A673 (cell line): ENCODE measurements at regions of chr2 and their contacts with region 1.

Region 1: DNA sequence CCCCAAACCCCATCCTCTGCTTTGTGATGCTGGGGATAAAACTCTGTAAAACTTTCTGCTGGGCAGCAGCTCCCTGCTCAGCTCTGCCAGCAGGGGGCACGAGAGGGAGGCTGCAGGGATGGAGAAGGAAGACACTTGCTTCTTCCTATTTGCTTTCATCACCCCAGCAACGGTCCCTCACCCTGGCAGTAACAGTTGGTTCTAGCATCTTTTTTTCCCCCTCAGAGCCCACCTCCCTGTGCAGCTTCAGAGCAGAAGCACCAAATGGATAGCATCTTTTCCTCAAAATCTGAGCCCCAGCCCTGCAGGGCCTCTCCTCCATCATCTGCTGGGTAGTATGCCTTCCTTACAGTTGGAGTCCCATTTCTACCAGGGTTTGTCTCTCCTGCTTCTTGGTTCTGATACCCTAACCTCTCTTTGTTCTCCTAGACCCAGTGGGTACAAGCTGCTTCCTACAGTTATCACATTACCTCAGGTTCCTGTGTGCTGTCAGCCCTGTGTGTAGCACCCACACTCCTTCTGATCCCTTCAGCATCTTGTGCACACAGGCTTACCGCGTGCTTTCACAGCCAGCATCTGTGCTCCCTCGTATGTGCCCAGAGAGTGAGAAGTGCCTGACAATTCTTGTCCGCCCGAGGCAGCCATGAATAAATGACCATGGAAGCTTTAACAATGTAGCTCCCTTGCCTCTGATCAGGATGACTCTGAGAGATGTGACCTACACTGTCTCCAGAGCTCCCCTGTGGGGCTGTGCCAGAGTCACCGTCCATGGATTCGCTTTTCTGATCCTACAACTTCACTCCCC is 14.5 kb downstream of the CKAP2L start:
- DNase-seq: peak; percentile 80
- H3K4me3 ChIP-seq: no peak overlapping the region
- H3K27ac ChIP-seq: no peak overlapping the region
- H3K4me1 ChIP-seq: no peaks in the 10 kb centered on the region
- H3K27me3 ChIP-seq: no peaks in the 10 kb centered on the region
- CTCF ChIP-seq: peak; percentile 94

Region 2: GRCh38 chr2:112884869-112885505 is 135.0 kb after region 1 on chr2:
- CTCF ChIA-PET with region 1: interaction called, 7 read pairs
- POLR2A ChIA-PET with region 1: no interaction called
- intact Hi-C with region 1: loop called (anchors 1 kb)
- DNase-seq: peak; percentile 37
- H3K4me3 ChIP-seq: no peak overlapping the region
- H3K27ac ChIP-seq: no peak overlapping the region
- H3K4me1 ChIP-seq: no peaks in the 10 kb centered on the region
- H3K27me3 ChIP-seq: no peaks in the 10 kb centered on the region
- CTCF ChIP-seq: peak; percentile 87

Region 3: GRCh38 chr2:112941753-112942658 is 192.0 kb after region 1 on chr2:
- CTCF ChIA-PET with region 1: interaction called, 39 read pairs
- POLR2A ChIA-PET with region 1: no interaction called
- intact Hi-C with region 1: loop called (anchors 1 kb)
- DNase-seq: peak; percentile 77
- H3K4me3 ChIP-seq: no peak overlapping the region
- H3K27ac ChIP-seq: no peak overlapping the region
- H3K4me1 ChIP-seq: no peaks in the 10 kb centered on the region
- H3K27me3 ChIP-seq: no peaks in the 10 kb centered on the region
- CTCF ChIP-seq: peak; percentile 90